AG04449 (cell line): ENCODE measurements at regions of chr9 and their contacts with region 1.

Region 1: DNA sequence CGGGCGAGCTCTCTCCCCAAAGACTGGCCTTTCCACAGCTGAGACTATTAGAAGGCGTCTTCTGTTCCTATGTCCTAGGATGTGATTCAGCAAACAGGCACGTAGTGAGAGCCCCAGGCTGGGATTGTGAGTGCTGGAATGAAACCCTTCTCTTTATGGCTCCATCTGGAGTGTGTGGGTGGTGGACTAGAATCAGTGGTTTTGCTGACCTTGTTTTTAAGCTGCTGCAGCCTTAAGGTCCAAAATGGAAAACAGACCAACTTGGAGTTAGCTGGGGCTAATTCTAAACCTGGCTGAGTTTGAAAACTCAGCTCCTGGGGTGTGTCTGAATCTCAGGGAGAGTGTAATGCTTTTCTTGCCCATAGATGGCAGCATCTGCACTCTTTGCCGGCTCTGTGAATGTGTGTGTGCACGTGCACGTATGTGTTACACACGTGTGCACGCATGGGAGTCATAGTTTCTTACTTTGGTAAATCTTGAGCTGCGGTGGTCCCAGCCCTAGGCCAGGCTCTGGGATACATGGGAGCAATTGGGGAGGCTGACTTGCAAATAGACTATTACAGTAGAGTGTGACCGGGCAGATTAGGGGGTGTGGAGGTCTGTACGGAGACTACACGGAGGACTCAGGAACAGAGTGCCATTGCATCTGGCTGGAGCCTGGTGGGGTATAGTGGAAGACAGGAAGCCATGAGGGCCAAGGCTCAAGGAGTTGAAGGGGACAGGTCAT is 10.7 kb downstream of the GSN start:
- DNase-seq: peak; percentile 99
- H3K4me3 ChIP-seq: peak overlapping the region; percentile 38
- CTCF ChIP-seq: peak; percentile 61

Region 2: GRCh38 chr9:121055642-121056143 is 223.0 kb before region 1 on chr9:
- CTCF ChIA-PET with region 1: no interaction called
- POLR2A ChIA-PET with region 1: no interaction called
- DNase-seq: no peak
- H3K4me3 ChIP-seq: no peak overlapping the region
- CTCF ChIP-seq: no peak

Region 3: DNA sequence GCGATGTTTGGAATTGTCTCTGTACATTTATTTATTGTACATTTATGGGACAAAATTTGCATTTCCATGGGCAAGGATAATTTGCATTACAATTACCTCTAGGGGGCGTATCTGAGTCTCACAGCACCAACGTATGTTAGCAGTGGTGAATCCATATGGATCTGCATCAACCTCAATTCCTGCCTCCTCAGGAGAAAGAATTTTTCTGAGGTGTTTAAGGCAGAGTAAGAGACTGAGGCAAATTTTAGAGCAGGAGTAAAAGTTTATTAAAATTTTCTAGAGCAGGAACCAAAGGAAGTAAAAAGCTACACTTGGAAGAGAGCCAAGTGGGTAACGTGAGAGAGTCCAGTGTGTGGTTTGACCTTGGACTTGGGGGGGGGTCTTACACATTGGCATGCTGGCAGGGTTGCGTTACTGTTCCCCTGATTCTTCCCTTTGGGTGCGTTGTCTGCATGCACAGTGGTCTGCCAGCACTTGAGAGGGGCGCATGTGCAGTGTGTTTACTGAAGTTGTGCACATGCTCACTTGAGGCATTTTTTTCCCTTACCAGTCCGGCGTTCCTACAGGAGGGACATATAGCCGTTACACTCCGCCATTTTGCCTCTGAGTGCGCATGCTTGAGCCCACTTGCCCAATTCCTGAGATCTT is 56.0 kb before region 1 on chr9:
- CTCF ChIA-PET with region 1: interaction called, 18 read pairs
- POLR2A ChIA-PET with region 1: interaction called, 5 read pairs
- DNase-seq: no peak
- H3K4me3 ChIP-seq: no peak overlapping the region
- CTCF ChIP-seq: peak; percentile 58

Region 4: GRCh38 chr9:121261107-121261460 is 17.6 kb before region 1 on chr9:
- CTCF ChIA-PET with region 1: interaction called, 10 read pairs
- POLR2A ChIA-PET with region 1: interaction called, 5 read pairs
- DNase-seq: no peak
- H3K4me3 ChIP-seq: no peak overlapping the region
- CTCF ChIP-seq: no peak

Region 5: GRCh38 chr9:121267689-121268597 is 10.8 kb before region 1 on chr9 and contains the start of gene GSN:
- CTCF ChIA-PET with region 1: interaction called, 48 read pairs
- POLR2A ChIA-PET with region 1: interaction called, 60 read pairs
- DNase-seq: no peak
- H3K4me3 ChIP-seq: peak within 1 kb of the TSS; percentile 91
- CTCF ChIP-seq: no peak

Region 6: GRCh38 chr9:121299467-121300234 is 21.0 kb after region 1 on chr9:
- CTCF ChIA-PET with region 1: interaction called, 19 read pairs
- POLR2A ChIA-PET with region 1: interaction called, 3 read pairs
- DNase-seq: no peak
- H3K4me3 ChIP-seq: peak overlapping the region; percentile 45
- CTCF ChIP-seq: no peak

Region 7: DNA sequence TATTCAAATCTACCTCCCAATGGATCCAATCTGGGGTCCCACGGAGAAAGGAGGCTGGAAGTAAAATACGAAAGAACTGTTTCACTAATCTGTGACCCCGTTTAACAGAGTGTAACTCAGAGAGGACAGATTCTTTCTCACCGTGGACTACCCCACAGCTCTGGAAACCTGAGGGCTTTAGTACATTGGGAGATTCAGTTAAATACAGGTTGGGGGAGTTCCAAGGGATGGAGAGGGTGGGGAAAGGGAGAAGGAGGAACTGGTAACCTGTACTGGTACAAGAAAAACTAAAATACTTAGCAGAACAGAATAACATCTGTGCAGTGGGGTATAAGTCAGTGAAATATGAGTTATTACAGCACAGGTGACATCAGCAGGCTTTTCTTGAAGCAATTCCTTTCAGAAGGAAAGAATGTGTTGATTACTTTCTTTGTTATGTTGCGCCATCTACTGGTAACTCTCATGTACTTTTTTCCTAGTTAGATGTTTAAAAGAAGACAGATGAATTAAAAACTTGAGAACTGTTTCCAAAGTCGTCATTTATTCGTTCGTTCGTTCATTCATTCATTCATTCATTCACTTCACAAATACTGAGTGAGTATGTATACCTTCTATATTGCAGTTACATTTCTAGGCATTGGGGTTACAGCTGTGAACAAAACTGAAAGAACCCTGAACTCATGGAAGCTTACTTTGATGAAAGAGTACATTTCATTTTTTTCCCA is 121.3 kb after region 1 on chr9:
- CTCF ChIA-PET with region 1: interaction called, 10 read pairs
- POLR2A ChIA-PET with region 1: interaction called, 6 read pairs
- DNase-seq: peak; percentile 37
- H3K4me3 ChIP-seq: no peak overlapping the region
- CTCF ChIP-seq: peak; percentile 28